HepG2 (cell line): ENCODE measurements at regions of chr17 and their contacts with region 1.

Region 1: GRCh38 chr17:64707019-64707591 is 45.0 kb upstream of the SMURF2 start:
- DNase-seq: peak; percentile 68
- ATAC-seq: no peak; the same call in 2 of the 3 replicates
- H3K4me3 ChIP-seq: no peak overlapping the region
- H3K27ac ChIP-seq: no peak overlapping the region
- H3K4me1 ChIP-seq: peaks cover 65% of the 10 kb centered on the region
- H3K27me3 ChIP-seq: no peaks in the 10 kb centered on the region
- CTCF ChIP-seq: no peak
- EP300 ChIP-seq: 0 out of 4 replicates have a peak, but pooled peaks of 1 of the 2 experiments have one; percentile 13
- POLR2A ChIP-seq: no peak
- RAD21 ChIP-seq: no peak

Region 2: DNA sequence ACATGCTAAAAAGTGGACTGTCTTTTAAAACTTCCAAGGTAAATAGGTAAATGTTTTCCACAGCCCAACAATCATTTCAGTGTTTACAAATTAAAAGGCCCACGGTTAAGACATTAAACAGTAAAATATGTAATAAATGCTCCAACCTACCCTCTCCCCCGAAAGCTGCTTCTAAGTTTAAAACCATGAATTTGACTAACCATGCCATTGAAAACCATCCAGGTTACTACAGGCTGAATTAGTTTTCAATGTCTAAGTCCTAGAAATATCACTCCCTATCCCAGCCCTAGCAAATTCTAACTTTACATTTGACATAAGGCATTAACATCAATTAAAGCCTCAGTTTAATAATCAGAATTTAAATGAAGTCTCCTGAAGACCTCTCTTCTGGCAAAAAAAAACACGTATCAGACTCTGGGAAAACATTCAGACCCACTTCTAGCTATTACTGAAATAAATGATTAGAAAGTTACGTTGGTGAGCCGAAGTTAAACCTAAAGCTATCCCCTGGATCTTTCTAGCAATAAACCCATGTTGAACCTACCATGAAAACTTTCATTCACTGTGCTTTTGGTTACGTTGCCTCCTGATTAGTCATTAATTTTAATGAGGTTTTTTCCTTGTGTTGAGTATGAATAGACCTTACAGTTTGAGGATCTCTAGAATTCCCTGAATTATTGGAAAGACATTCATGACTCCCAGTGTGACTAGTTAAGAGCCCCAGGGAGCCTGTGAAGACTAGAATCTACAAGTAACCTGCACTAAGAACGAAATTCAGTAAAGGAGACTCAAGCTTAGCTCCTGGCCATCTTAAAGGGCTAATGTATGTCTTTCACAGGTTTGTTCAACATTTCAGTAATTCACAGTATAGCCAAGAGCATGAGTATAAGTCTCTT is 208.5 kb before region 1 on chr17:
- CTCF ChIA-PET with region 1: no interaction called
- POLR2A ChIA-PET with region 1: no interaction called
- in situ Hi-C with region 1: no loop called
- intact Hi-C with region 1: no loop called
- DNase-seq: no peak
- ATAC-seq: no peak
- H3K4me3 ChIP-seq: no peak overlapping the region
- H3K27ac ChIP-seq: peak overlapping the region; percentile 74
- H3K4me1 ChIP-seq: peaks cover 84% of the 10 kb centered on the region
- H3K27me3 ChIP-seq: no peaks in the 10 kb centered on the region; a peak in 1 of 5 replicates
- CTCF ChIP-seq: no peak
- EP300 ChIP-seq: no peak
- POLR2A ChIP-seq: peak in 1 of 2 experiments; percentile 81; a peak in 2 of 4 replicates
- RAD21 ChIP-seq: no peak

Region 3: DNA sequence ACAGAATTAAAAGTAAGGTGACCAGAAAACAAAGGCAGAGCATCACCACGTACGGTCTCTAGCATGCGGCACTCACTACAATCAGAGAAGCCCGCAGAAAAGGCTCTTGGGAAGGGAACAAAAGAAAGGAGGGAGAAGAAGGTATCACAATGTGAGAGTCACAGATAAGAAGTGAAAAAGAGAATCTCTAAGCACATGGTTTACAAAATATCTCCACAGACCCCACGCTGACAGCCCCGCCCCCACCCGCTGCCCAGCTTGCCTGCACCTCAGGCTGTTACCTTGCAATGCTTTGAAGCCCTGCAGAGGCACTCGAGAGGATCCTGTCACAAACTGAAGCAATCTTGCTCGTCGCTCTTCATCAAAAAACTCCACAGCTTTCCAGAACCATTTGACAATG is 159.8 kb before region 1 on chr17:
- CTCF ChIA-PET with region 1: no interaction called
- POLR2A ChIA-PET with region 1: no interaction called
- in situ Hi-C with region 1: no loop called
- intact Hi-C with region 1: no loop called
- DNase-seq: no peak
- ATAC-seq: no peak
- H3K4me3 ChIP-seq: no peak overlapping the region
- H3K27ac ChIP-seq: no peak overlapping the region
- H3K4me1 ChIP-seq: no peaks in the 10 kb centered on the region
- H3K27me3 ChIP-seq: no peaks in the 10 kb centered on the region
- CTCF ChIP-seq: no peak
- EP300 ChIP-seq: no peak
- POLR2A ChIP-seq: no peak
- RAD21 ChIP-seq: no peak

Region 4: GRCh38 chr17:64694207-64694606 is 12.9 kb before region 1 on chr17:
- CTCF ChIA-PET with region 1: no interaction called
- POLR2A ChIA-PET with region 1: no interaction called
- in situ Hi-C with region 1: no loop called
- intact Hi-C with region 1: no loop called
- DNase-seq: peak; percentile 98
- ATAC-seq: peak; percentile 98
- H3K4me3 ChIP-seq: no peak overlapping the region; a peak in 1 of 6 replicates
- H3K27ac ChIP-seq: peak overlapping the region; percentile 12
- H3K4me1 ChIP-seq: peaks cover 32% of the 10 kb centered on the region
- H3K27me3 ChIP-seq: no peaks in the 10 kb centered on the region; a peak in 1 of 5 replicates
- CTCF ChIP-seq: no peak
- EP300 ChIP-seq: peak; percentile 42 to 66; a peak in 2 of 4 replicates
- POLR2A ChIP-seq: no peak
- RAD21 ChIP-seq: no peak

Region 5: DNA sequence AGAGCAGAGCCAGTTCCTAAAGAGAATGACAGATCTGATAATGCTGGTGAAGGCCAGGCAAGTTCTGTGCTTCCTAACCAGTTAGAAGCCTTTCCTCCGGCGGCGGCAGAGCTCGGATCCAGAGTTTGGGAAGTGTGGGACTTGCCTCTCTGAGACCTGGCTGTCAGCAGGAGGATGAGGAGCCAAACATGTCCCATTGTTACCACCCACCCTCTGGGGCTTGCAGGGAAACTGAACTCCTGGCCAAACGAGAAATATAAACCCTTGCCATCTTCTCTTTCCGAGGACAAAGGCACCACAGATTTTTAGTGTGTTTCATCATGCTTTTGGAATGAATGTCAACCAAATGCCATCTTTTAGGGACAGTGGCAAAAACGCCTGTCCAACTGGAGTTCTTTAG is 35.2 kb after region 1 on chr17:
- CTCF ChIA-PET with region 1: no interaction called
- POLR2A ChIA-PET with region 1: no interaction called
- in situ Hi-C with region 1: no loop called
- intact Hi-C with region 1: no loop called
- DNase-seq: no peak
- ATAC-seq: no peak
- H3K4me3 ChIP-seq: no peak overlapping the region
- H3K27ac ChIP-seq: no peak overlapping the region
- H3K4me1 ChIP-seq: peaks cover 24% of the 10 kb centered on the region
- H3K27me3 ChIP-seq: no peaks in the 10 kb centered on the region
- CTCF ChIP-seq: no peak
- EP300 ChIP-seq: no peak
- POLR2A ChIP-seq: no peak
- RAD21 ChIP-seq: no peak

Region 6: GRCh38 chr17:64938925-64939474 is 231.9 kb after region 1 on chr17:
- CTCF ChIA-PET with region 1: no interaction called
- POLR2A ChIA-PET with region 1: no interaction called
- in situ Hi-C with region 1: no loop called
- intact Hi-C with region 1: loop called (anchors 5 kb)
- DNase-seq: peak; percentile 58
- ATAC-seq: peak; percentile 96
- H3K4me3 ChIP-seq: no peak overlapping the region; a peak in 1 of 6 replicates
- H3K27ac ChIP-seq: no peak overlapping the region
- H3K4me1 ChIP-seq: peaks cover 10% of the 10 kb centered on the region
- H3K27me3 ChIP-seq: no peaks in the 10 kb centered on the region
- CTCF ChIP-seq: peak; percentile 99
- EP300 ChIP-seq: no peak
- POLR2A ChIP-seq: no peak
- RAD21 ChIP-seq: peak; percentile 93